Activated naive CD4-positive, alpha-beta T cell treated with anti-CD3 and anti-CD28 coated beads for 36 hours (primary cell): ENCODE measurements at regions of chr22 and their contacts with region 1.

Region 1: DNA sequence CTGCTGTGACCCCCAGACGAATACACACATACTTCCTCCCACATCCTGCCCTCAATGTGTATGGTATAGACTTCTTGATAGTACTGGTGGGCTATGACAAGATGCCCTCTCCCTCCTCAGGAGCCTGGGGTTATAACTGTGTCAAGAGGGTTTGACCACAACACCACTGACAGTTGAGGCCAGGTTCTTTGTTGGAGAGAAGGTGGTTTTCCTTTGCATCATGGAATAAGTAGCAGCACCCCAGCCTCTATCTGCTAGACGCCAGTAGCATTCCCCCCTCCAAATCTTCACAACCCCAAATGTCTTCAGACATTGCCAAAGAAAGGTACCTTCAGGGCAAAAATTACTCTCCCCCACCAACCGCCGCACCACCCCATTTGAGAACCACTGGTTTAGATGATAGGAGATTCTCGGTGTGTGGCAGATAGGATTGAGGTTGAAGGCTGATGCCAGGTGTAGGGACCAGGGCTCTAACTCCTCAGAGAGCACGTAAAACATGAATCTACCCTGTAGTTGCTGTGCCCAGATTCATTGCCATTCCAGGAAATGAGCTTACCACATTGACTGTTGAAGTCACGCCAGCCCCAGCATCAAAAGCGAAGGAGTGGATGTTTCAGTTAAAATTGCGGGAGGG is 5.5 kb upstream of the MYO18B start:
- DNase-seq: peak; percentile 83
- H3K4me3 Mint-ChIP-seq: peak overlapping the region; percentile 51
- H3K27ac Mint-ChIP-seq: peak overlapping the region; percentile 89
- H3K4me1 Mint-ChIP-seq: peaks cover 36% of the 10 kb centered on the region
- H3K27me3 Mint-ChIP-seq: peaks cover 6% of the 10 kb centered on the region

Region 2: GRCh38 chr22:25602916-25603315 is 133.6 kb before region 1 on chr22:
- CTCF ChIA-PET with region 1: no interaction called
- intact Hi-C with region 1: no loop called
- DNase-seq: no peak
- H3K4me3 Mint-ChIP-seq: no peak overlapping the region
- H3K27ac Mint-ChIP-seq: no peak overlapping the region
- H3K4me1 Mint-ChIP-seq: peaks cover 10% of the 10 kb centered on the region
- H3K27me3 Mint-ChIP-seq: no peaks in the 10 kb centered on the region

Region 3: DNA sequence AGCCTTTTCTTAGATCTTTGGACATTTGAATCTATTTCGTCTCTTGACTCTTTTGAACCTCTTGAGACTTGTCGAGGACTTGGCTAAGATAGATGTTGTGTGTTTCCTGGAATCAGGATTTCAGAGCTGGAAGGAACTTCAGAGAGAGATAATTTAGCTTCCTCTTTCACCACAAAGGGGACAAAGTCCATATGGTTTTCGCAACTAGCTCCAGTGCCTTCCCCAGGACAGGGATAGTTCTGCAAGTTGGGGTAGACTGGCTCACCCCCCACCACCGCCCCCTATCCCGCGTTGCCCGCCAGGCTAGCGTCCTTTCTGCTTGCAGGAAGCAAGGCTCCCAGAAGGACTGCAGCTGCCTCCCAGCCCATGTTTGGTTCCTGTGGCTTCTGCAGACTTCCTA is 70.2 kb before region 1 on chr22:
- CTCF ChIA-PET with region 1: no interaction called
- intact Hi-C with region 1: no loop called
- DNase-seq: no peak
- H3K4me3 Mint-ChIP-seq: no peak overlapping the region
- H3K27ac Mint-ChIP-seq: no peak overlapping the region
- H3K4me1 Mint-ChIP-seq: no peaks in the 10 kb centered on the region
- H3K27me3 Mint-ChIP-seq: no peaks in the 10 kb centered on the region

Region 4: DNA sequence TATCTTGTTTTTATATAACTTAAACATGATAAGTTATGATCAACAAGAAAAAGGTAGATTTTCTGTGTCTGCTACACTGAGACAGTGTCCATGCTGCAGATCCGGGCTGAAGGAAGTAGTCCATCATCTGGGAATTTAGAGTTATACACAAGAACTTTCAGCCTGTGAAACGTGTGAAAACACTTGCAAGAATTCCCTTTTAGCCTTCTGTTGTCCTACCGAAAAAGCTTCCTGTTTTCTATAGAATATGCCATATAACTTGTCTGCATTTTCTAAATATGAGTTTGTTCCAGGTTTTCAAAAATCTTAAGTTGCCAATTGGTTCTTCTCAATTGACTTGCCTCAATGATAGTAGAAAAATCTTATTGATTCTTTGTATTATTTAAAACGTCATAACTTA is 58.9 kb before region 1 on chr22:
- CTCF ChIA-PET with region 1: no interaction called
- intact Hi-C with region 1: no loop called
- DNase-seq: no peak
- H3K4me3 Mint-ChIP-seq: no peak overlapping the region
- H3K27ac Mint-ChIP-seq: no peak overlapping the region
- H3K4me1 Mint-ChIP-seq: peaks cover 6% of the 10 kb centered on the region
- H3K27me3 Mint-ChIP-seq: no peaks in the 10 kb centered on the region

Region 5: GRCh38 chr22:25709758-25710157 is 26.7 kb before region 1 on chr22:
- CTCF ChIA-PET with region 1: no interaction called
- intact Hi-C with region 1: loop called (anchors 1 kb)
- DNase-seq: peak; percentile 83
- H3K4me3 Mint-ChIP-seq: no peak overlapping the region
- H3K27ac Mint-ChIP-seq: peak overlapping the region; percentile 48
- H3K4me1 Mint-ChIP-seq: peaks cover 16% of the 10 kb centered on the region
- H3K27me3 Mint-ChIP-seq: no peaks in the 10 kb centered on the region

Region 6: GRCh38 chr22:25749420-25750169 is 13.1 kb after region 1 on chr22:
- CTCF ChIA-PET with region 1: interaction called, 4 read pairs
- intact Hi-C with region 1: loop called (anchors 1 kb)
- DNase-seq: peak; percentile 72
- H3K4me3 Mint-ChIP-seq: no peak overlapping the region
- H3K27ac Mint-ChIP-seq: peak overlapping the region; percentile 83
- H3K4me1 Mint-ChIP-seq: peaks cover 27% of the 10 kb centered on the region
- H3K27me3 Mint-ChIP-seq: no peaks in the 10 kb centered on the region